Caco-2 (cell line): ENCODE measurements at regions of chr22 and their contacts with region 1.

Region 1: DNA sequence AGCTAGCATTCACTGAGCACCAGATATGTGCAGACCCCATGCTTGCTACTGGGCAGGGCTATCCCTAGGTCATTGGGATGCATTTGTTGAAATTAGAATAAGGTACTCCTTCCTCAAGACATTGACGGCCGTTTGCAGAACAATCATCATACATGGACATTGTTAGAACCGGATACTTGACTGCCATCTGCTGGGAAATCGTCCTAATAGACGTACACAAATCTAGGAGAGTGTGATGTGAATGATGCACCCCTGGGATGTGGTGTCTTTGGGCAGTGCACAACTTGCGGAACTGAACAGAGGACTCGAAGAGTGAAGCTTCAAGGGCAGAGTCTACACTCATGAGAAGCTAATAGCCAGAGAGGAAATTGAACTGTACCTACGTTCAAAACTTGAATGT is 35.9 kb downstream of the MYO18B start:
- DNase-seq: peak in 1 of 2 experiments; percentile 53
- H3K4me3 ChIP-seq: no peak overlapping the region
- H3K4me3 Mint-ChIP-seq: no peak overlapping the region
- H3K27ac Mint-ChIP-seq: no peak overlapping the region
- H3K4me1 ChIP-seq: no peaks in the 10 kb centered on the region
- H3K4me1 Mint-ChIP-seq: peaks cover 3% of the 10 kb centered on the region
- H3K27me3 ChIP-seq: no peaks in the 10 kb centered on the region
- H3K27me3 Mint-ChIP-seq: peaks cover 3% of the 10 kb centered on the region
- CTCF ChIP-seq: peak; percentile 23 to 47

Region 2: GRCh38 chr22:25235547-25236290 is 542.2 kb before region 1 on chr22:
- CTCF ChIA-PET with region 1: no interaction called
- POLR2A ChIA-PET with region 1: no interaction called
- intact Hi-C with region 1: loop called (anchors 5 kb)
- DNase-seq: peak; percentile 89 to 92
- H3K4me3 ChIP-seq: peak overlapping the region; percentile 18
- H3K4me3 Mint-ChIP-seq: peak overlapping the region; percentile 44
- H3K27ac Mint-ChIP-seq: no peak overlapping the region
- H3K4me1 ChIP-seq: no peaks in the 10 kb centered on the region
- H3K4me1 Mint-ChIP-seq: no peaks in the 10 kb centered on the region
- H3K27me3 ChIP-seq: no peaks in the 10 kb centered on the region
- H3K27me3 Mint-ChIP-seq: peaks cover 11% of the 10 kb centered on the region
- CTCF ChIP-seq: peak; percentile 79 to 95

Region 3: GRCh38 chr22:25465949-25466348 is 311.9 kb before region 1 on chr22:
- CTCF ChIA-PET with region 1: interaction called, 18 read pairs
- POLR2A ChIA-PET with region 1: no interaction called
- intact Hi-C with region 1: loop called (anchors 1 kb)
- DNase-seq: no peak
- H3K4me3 ChIP-seq: no peak overlapping the region
- H3K4me3 Mint-ChIP-seq: no peak overlapping the region
- H3K27ac Mint-ChIP-seq: no peak overlapping the region
- H3K4me1 ChIP-seq: no peaks in the 10 kb centered on the region
- H3K4me1 Mint-ChIP-seq: no peaks in the 10 kb centered on the region
- H3K27me3 ChIP-seq: no peaks in the 10 kb centered on the region
- H3K27me3 Mint-ChIP-seq: no peaks in the 10 kb centered on the region
- CTCF ChIP-seq: no peak

Region 4: DNA sequence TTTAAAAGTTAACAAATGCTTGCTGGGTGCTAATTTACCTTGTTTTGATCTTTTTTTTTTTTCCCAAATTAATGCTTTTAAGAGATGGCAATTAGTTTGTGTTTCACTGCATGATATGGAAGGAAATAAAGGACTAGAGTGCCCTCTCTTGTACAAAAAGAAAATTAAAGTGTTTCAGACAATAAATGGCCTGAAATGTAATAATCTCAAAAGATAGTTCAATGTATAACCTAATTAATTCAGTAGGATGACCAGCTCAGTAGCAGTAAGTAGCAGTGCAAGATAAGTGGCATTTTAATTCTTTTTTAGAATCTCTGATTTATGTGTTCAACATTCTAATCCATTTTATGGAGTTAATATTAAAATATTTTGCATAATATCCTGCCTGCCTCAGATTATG is 75.8 kb before region 1 on chr22:
- CTCF ChIA-PET with region 1: no interaction called
- POLR2A ChIA-PET with region 1: no interaction called
- intact Hi-C with region 1: loop called (anchors 5 kb)
- DNase-seq: no peak
- H3K4me3 ChIP-seq: no peak overlapping the region
- H3K4me3 Mint-ChIP-seq: no peak overlapping the region
- H3K27ac Mint-ChIP-seq: no peak overlapping the region
- H3K4me1 ChIP-seq: no peaks in the 10 kb centered on the region
- H3K4me1 Mint-ChIP-seq: no peaks in the 10 kb centered on the region
- H3K27me3 ChIP-seq: no peaks in the 10 kb centered on the region
- H3K27me3 Mint-ChIP-seq: no peaks in the 10 kb centered on the region
- CTCF ChIP-seq: no peak

Region 5: DNA sequence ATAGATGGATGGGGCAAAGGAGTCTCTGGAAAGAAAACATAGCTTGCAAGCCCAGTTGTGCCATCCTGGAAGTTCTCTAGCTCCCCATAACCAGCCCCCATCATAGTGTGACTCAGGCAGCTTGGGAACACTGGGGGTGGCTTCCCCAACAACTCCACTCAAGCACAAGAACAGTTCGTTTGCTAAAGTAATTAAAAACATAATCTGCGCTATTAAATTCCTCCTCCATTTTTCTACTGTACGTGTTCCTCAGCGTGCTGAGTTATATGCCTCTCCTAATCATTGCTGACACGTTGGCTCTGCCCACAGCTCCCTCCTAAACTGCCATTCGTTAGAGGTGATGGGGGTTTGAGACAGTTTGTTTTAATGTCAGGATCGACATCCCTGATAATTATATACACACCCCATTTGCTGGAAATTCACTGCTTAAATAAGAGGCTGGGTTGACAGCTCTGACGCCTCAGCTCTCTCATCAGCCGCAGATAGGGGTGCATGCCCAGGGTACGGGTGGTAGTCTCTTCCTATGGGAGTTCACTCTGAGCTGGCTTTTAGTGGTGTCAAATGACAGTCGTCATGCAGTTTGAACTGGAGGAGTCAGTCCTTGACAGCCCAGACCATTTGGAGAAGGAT is 331.9 kb after region 1 on chr22:
- CTCF ChIA-PET with region 1: no interaction called
- POLR2A ChIA-PET with region 1: no interaction called
- intact Hi-C with region 1: no loop called
- DNase-seq: no peak
- H3K4me3 ChIP-seq: no peak overlapping the region
- H3K4me3 Mint-ChIP-seq: no peak overlapping the region
- H3K27ac Mint-ChIP-seq: no peak overlapping the region
- H3K4me1 ChIP-seq: no peaks in the 10 kb centered on the region
- H3K4me1 Mint-ChIP-seq: no peaks in the 10 kb centered on the region
- H3K27me3 ChIP-seq: no peaks in the 10 kb centered on the region
- H3K27me3 Mint-ChIP-seq: peaks cover 17% of the 10 kb centered on the region
- CTCF ChIP-seq: no peak

Region 6: GRCh38 chr22:26330966-26331625 is 553.2 kb after region 1 on chr22:
- CTCF ChIA-PET with region 1: interaction called, 4 read pairs
- POLR2A ChIA-PET with region 1: no interaction called
- intact Hi-C with region 1: loop called (anchors 2 kb)
- DNase-seq: peak; percentile 63 to 76
- H3K4me3 ChIP-seq: no peak overlapping the region
- H3K4me3 Mint-ChIP-seq: no peak overlapping the region
- H3K27ac Mint-ChIP-seq: no peak overlapping the region
- H3K4me1 ChIP-seq: no peaks in the 10 kb centered on the region
- H3K4me1 Mint-ChIP-seq: no peaks in the 10 kb centered on the region
- H3K27me3 ChIP-seq: no peaks in the 10 kb centered on the region; the same call in 1 of the 2 replicates
- H3K27me3 Mint-ChIP-seq: peaks cover 3% of the 10 kb centered on the region
- CTCF ChIP-seq: peak; percentile 83 to 85